ENCODE measurements at regions of chr20 and their contacts with region 1.

Region 1: DNA sequence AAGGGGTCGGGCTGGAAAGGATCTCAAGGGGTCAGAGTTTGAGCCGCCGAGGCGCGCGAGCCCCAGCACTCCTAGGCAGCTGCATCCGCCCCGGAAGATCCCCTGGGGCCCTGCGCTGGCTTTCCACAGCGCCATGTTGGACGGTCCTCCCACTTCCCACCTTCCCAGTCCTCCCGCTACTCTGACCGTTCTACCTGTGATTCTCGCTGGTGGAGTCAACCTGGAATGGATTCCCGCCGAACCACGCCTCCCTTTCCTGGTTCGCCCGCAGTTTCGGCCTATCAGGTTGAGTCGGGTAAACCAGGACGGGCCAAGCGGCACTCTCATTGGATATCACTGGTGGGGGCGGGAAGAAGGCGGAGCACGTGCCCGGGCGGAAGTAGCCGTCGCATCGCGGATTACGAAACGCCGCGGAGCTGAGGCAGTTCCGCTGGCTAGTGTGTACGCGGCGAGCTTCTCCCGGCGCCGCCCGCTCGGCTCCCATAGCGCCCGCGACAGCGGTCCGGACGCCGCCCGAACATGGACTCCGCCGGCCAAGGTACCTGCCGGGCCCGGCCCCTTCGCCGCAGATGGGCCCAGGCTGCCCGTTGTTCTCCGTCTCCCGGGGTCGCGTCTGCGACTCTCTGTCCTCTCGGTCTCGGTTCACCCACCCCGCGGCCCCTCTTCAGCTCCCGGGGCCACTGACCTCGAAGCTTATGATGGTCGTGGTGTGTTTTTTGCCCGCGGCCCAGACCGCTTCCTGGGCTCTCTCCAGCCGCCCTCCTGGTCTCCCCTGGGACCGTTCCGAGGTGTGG is at the start of gene TPD52L2:
- DNase-seq: peak; percentile 99
- ATAC-seq: peak; percentile 95
- total RNA-seq, gene TPD52L2: 78.0 TPM

Region 2: GRCh38 chr20:63537525-63538203 is 327.4 kb before region 1 on chr20:
- intact Hi-C with region 1: loop called (anchors 5 kb)
- DNase-seq: peak; percentile 92
- ATAC-seq: peak; percentile 91

Region 3: GRCh38 chr20:63739130-63740069 is 125.6 kb before region 1 on chr20 and contains the start of gene SLC2A4RG:
- intact Hi-C with region 1: loop called (anchors 2 kb)
- DNase-seq: peak; percentile 91
- ATAC-seq: peak; percentile 73
- total RNA-seq, gene SLC2A4RG: 97.4 TPM

Region 4: GRCh38 chr20:63785691-63786131 is 79.3 kb before region 1 on chr20:
- intact Hi-C with region 1: loop called (anchors 1 kb)
- DNase-seq: no peak
- ATAC-seq: no peak

Region 5: DNA sequence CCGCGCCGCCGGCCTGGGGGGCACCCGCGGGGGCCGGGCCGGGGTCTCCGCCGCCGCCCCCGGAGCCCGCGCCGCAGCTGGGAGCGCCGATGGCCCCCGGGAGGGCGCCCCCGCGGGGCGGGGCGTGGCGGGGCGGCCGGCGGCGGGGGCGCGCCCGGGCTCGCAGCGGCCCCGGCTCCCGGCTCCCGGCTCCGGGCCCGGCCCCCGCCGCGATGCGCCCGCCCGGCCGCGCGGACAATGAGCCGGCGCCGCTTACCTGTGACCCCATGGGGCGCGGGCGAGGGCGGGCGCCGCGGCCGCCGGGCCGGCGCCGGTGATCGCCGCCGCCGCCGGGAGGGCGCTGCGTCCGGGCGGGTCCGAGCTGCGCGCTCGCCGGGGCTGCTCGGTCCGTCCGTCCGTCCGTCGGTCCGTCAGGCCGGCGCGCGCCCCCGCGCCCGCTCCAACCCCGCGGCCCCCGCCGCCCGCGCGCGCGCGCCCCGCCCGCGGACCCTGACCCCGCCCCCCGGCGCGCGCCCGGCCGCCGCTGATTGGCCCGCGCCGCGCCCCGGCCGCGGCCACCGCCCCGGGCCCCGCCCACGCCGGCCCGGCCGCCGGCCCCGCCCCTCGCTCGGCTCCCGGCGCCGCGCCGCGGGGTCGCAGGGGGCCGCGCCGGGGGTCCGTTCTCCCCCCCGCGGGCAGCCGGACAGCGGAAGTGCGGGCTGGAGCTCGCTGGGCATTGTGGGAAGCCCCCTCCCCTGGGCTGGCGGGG is 34.0 kb before region 1 on chr20 and contains the start of gene ZBTB46:
- intact Hi-C with region 1: loop called (anchors 2 kb)
- DNase-seq: peak; percentile 88
- ATAC-seq: peak; percentile 33
- total RNA-seq, gene ZBTB46: 13.8 TPM